MCF 10A (cell line): ENCODE measurements at regions of chr6 and their contacts with region 1.

Region 1: DNA sequence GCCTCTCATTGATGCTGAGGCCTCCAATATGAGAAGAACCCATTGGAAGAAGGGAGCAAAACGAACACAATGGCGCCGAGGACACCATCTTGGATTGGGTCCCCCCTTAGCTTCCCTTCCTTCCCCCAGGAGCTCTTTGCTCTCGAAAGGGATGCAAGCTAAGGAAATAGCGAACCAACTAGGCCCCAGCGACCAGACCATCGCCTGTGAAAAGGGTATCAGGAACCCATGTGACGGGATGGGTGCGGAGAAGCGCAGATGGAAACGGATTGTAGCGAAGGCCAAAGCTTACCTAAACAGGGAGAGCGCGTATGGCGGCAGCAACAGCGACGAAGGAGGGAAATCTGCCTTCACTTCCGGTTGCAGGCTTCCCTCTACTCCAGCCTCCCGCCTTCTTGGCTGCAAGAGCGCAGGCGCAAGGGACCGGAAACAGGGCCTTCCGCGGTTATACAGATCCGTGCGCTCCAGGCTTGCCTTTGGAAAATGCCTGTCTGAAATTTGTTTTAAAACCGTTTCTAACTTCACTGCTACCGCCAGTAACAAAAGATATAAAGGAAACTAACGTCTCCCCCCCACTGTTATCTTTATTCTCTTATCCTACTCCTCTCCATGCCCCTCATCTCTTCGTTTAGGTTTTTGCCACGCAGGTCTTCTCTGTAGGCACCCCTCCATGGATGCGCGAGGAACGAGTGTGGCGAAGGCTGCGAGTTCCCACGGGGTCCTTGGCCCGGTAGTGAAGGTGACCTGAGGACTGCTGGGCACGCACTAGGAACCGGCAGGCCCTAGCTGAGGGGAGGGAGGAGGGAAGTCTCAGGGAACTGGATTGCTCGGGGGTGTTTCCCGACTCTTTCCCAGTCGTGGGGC is at the start of gene DDX39B:
- DNase-seq: peak; percentile 97
- H3K4me3 Mint-ChIP-seq: peak within 1 kb of the TSS; percentile 71
- H3K27ac Mint-ChIP-seq: peak within 1 kb of the TSS; percentile 96
- H3K4me1 Mint-ChIP-seq: peaks cover 40% of the 10 kb centered on the region
- H3K27me3 Mint-ChIP-seq: no peaks in the 10 kb centered on the region
- CTCF ChIP-seq: no peak
- total RNA-seq, gene DDX39B: 551 and 565 TPM in 2 replicates

Region 2: GRCh38 chr6:31399589-31400466 is 142.1 kb before region 1 on chr6:
- CTCF ChIA-PET with region 1: interaction called, 3 read pairs
- POLR2A ChIA-PET with region 1: interaction called, 48 read pairs
- intact Hi-C with region 1: loop called (anchors 2 kb)
- DNase-seq: peak; percentile 93
- H3K4me3 Mint-ChIP-seq: peak overlapping the region; percentile 73
- H3K27ac Mint-ChIP-seq: peak overlapping the region; percentile 83
- H3K4me1 Mint-ChIP-seq: peaks cover 24% of the 10 kb centered on the region
- H3K27me3 Mint-ChIP-seq: no peaks in the 10 kb centered on the region
- CTCF ChIP-seq: peak; percentile 93

Region 3: DNA sequence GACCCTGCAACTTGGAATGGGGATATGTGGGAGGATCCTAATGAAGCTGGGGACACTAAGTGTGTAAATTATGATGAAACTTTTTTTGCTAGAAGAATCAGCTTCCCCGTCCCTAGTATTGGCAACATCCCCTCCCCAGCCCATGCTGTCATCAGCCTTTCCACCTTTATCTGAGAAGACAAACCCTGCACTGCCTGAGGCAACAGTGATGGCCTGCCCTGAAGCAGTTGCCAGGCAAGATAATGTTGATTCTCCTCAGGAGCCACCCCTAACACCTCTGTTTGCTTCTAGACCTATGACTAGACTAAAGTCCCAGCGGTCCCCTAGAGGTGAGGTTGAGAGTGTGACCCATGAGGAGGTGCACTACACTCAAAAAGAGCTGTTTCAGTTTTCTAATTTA is 111.4 kb before region 1 on chr6:
- CTCF ChIA-PET with region 1: no interaction called
- POLR2A ChIA-PET with region 1: no interaction called
- intact Hi-C with region 1: no loop called
- DNase-seq: no peak
- H3K4me3 Mint-ChIP-seq: no peak overlapping the region
- H3K27ac Mint-ChIP-seq: no peak overlapping the region
- H3K4me1 Mint-ChIP-seq: no peaks in the 10 kb centered on the region
- H3K27me3 Mint-ChIP-seq: peaks cover 18% of the 10 kb centered on the region
- CTCF ChIP-seq: no peak

Region 4: DNA sequence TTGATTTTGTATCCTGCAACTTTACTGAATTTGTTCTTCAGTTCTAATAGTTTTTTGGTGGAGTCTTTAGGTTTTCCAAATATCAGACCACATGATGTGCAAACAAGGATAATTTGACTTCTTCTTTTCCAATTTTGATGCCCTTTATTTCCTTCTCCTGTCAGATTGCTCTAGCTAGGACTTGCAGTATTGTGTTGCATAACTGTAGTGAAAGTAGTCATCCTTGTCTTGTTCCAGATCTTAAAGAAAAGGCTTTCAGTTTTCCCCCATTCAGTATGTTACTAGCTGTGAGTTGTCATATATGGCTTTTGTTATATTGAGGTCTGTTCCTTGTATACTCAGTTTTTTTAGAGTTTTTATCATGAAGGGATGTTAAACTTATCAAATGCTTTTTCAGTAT is 39.3 kb before region 1 on chr6:
- CTCF ChIA-PET with region 1: interaction called, 8 read pairs
- POLR2A ChIA-PET with region 1: interaction called, 173 read pairs
- intact Hi-C with region 1: loop called (anchors 1 kb)
- DNase-seq: no peak
- H3K4me3 Mint-ChIP-seq: no peak overlapping the region
- H3K27ac Mint-ChIP-seq: no peak overlapping the region
- H3K4me1 Mint-ChIP-seq: peaks cover 16% of the 10 kb centered on the region
- H3K27me3 Mint-ChIP-seq: no peaks in the 10 kb centered on the region
- CTCF ChIP-seq: no peak

Region 5: DNA sequence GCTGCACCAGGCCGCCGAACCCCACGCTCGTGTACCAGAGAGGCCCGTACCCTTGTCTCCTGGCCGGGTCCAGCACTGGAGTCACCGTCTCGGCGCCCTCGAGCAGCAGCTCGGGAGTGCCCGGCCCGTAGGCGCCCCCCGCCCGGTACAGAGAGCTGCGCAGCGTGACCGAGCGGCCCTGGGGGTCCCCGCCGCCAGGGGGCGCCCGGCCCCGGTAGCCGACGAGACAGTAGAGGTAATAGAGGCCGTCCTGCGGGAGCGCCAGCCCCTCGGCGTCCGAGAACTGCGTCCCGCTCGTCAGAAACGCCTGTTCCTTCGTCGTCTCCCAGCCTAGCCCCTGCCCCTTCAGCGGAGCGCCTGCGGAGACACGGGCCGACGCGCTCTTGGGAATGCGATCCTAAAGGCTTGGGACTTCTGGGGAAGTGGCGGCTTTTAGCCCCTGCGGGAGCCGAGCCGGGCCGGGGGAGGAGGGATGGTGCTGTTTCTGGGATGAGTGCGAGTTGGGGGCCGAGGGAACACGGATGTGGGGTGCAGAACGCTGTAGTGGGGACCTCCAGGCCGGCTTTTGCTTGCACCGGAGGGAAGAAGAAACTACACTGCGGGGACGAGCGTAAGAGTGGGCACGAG is 39.0 kb after region 1 on chr6:
- CTCF ChIA-PET with region 1: interaction called, 7 read pairs
- POLR2A ChIA-PET with region 1: interaction called, 10 read pairs
- intact Hi-C with region 1: loop called (anchors 5 kb)
- DNase-seq: peak; percentile 61
- H3K4me3 Mint-ChIP-seq: peak overlapping the region; percentile 96
- H3K27ac Mint-ChIP-seq: peak overlapping the region; percentile 66
- H3K4me1 Mint-ChIP-seq: peaks cover 10% of the 10 kb centered on the region
- H3K27me3 Mint-ChIP-seq: no peaks in the 10 kb centered on the region
- CTCF ChIP-seq: peak; percentile 87

Region 6: DNA sequence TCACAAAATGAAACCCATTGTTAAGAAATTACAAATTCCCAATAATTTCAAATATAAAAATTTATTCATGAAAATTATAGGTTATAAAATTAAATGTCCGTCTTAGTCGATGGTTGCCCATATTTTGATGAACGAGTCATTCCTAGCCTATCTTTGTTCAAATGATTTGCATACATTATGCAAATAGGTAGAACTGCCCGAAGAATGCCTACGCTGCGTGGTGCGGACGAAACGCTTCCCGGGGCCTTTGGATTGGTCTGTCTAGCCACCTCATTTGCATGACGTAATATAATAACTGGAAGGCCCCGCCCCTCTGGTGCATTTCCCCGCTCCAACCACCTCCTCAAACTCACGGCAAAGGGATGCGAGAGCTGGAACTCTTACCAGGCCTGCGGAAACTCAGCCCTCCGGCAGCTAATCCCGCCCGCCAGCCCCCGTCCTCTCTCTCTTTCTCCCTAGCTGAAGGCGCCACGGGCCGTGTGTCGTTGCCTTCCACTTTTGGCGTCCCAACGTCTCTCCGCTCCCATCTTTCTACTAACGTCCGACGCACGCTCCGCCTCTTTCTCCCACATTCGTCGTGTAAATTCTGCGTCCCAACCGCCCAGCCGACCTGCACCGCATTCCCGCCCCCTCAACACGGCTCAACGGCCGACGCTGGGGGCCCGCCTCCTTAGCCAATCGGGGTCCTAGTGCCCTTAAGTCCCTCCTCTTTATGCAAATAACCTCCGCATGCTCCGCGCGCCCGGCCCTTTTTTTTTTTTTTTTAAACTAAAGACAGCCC is 78.1 kb after region 1 on chr6:
- CTCF ChIA-PET with region 1: no interaction called
- POLR2A ChIA-PET with region 1: interaction called, 55 read pairs
- intact Hi-C with region 1: loop called (anchors 1 kb)
- DNase-seq: peak; percentile 99
- H3K4me3 Mint-ChIP-seq: peak overlapping the region; percentile 76
- H3K27ac Mint-ChIP-seq: peak overlapping the region; percentile 89
- H3K4me1 Mint-ChIP-seq: peaks cover 17% of the 10 kb centered on the region
- H3K27me3 Mint-ChIP-seq: no peaks in the 10 kb centered on the region
- CTCF ChIP-seq: no peak

Region 7: GRCh38 chr6:31665501-31666336 is 123.8 kb after region 1 on chr6 and contains the start of gene CSNK2B:
- CTCF ChIA-PET with region 1: interaction called, 4 read pairs
- POLR2A ChIA-PET with region 1: interaction called, 21 read pairs
- intact Hi-C with region 1: no loop called
- DNase-seq: peak; percentile 98
- H3K4me3 Mint-ChIP-seq: peak within 1 kb of the TSS; percentile 99
- H3K27ac Mint-ChIP-seq: peak within 1 kb of the TSS; percentile 99
- H3K4me1 Mint-ChIP-seq: peaks cover 31% of the 10 kb centered on the region
- H3K27me3 Mint-ChIP-seq: no peaks in the 10 kb centered on the region
- CTCF ChIP-seq: no peak
- total RNA-seq, gene CSNK2B: 197 and 209 TPM in 2 replicates

Region 8: GRCh38 chr6:31822036-31822821 is 280.3 kb after region 1 on chr6:
- CTCF ChIA-PET with region 1: no interaction called
- POLR2A ChIA-PET with region 1: interaction called, 11 read pairs
- intact Hi-C with region 1: no loop called
- DNase-seq: peak; percentile 94
- H3K4me3 Mint-ChIP-seq: peak overlapping the region; percentile 91
- H3K27ac Mint-ChIP-seq: peak overlapping the region; percentile 99
- H3K4me1 Mint-ChIP-seq: peaks cover 29% of the 10 kb centered on the region
- H3K27me3 Mint-ChIP-seq: no peaks in the 10 kb centered on the region
- CTCF ChIP-seq: no peak